HCT116 (cell line): ENCODE measurements at regions of chr3 and their contacts with region 1.

Region 1: DNA sequence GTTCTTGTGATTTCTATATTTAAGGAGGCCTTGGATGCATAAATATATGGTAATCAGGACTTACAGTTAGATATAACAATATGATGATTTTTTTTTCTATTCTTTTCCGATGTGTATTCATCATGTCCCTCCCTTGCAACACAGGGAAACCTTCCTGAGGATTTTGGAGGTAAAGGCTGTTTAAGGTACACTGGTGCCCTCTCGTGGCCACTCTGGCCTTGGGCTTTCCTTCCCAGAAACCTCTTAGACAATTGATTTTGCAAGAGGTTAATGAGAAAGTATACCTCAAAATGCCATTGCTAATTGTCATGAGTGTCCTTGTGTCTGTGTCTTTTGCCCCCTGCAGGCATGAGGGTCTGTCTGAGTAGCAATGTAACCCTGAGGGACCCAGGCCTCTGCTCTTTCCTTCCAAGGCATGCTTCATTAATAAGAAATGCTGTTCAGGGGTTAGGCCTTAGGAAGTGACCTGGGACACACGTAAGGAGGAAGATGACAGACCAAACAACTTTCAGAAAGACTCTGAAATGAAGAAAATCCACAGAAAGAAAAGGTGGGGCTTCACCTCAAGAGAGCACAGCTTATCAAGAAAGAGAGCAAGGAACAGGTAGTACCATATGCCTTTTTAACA is 70.3 kb upstream of the PPP2R3A start:
- DNase-seq: peak; percentile 72
- ATAC-seq: peak; percentile 79
- H3K4me3 ChIP-seq: no peak overlapping the region
- H3K27ac ChIP-seq: no peak overlapping the region
- H3K4me1 ChIP-seq: peaks cover 0 to 10% of the 10 kb centered on the region in 2 experiments; a peak in 1 of 4 replicates
- H3K27me3 ChIP-seq: no peaks in the 10 kb centered on the region
- CTCF ChIP-seq: peak; percentile 70 to 94 (median 90)
- POLR2A ChIP-seq: no peak
- RAD21 ChIP-seq: peak; percentile 91

Region 2: DNA sequence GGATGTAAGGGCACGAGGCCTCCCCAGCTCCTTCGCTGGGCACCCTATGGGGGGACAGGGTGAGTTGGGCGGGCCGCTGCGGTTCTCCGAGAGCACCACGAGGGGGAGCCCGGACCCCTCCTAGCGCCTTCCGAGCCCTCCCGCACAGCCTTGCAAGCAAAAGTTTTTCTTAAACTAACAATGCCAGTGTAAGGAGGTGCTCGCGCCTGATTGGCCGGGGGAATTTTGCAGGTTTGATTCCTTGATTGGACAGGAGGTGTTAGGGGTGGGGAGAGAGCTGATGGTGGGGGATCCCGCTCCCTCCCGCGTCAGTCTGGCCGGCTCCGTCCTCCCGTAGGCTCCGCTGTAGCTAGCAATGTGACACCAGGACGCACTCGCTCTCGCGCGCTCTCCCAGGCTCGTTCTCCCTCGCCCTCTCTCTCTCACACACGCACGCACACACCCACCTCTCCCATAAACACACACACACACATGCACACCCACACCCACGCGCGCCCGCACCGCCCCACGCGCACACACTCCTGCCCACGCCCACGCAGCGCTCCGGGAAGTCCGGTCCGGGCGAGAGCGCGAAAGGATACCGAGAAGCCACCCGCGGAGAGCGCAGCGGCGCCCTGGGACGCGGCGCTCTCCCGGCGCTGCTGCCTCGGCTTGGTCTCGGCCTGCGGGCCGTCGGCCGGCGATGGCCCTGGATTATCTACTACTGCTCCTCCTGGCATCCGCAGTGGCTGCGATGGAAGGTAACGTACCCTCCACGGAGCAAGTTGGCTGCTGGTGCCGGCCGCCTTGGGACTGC is 1100.1 kb before region 1 on chr3 and contains the start of gene EPHB1:
- CTCF ChIA-PET with region 1: no interaction called
- POLR2A ChIA-PET with region 1: no interaction called
- RAD21 ChIA-PET with region 1: no interaction called
- intact Hi-C with region 1: loop called (anchors 1 kb)
- DNase-seq: peak; percentile 60
- ATAC-seq: peak; percentile 97
- H3K4me3 ChIP-seq: no peak within 1 kb of the TSS
- H3K27ac ChIP-seq: no peak within 1 kb of the TSS
- H3K4me1 ChIP-seq: no peaks in the 10 kb centered on the region
- H3K27me3 ChIP-seq: peaks cover 30% of the 10 kb centered on the region
- CTCF ChIP-seq: peak; percentile 70 to 92 (median 89)
- POLR2A ChIP-seq: no peak
- RAD21 ChIP-seq: peak; percentile 91
- total RNA-seq, gene EPHB1: 0.86 TPM

Region 3: DNA sequence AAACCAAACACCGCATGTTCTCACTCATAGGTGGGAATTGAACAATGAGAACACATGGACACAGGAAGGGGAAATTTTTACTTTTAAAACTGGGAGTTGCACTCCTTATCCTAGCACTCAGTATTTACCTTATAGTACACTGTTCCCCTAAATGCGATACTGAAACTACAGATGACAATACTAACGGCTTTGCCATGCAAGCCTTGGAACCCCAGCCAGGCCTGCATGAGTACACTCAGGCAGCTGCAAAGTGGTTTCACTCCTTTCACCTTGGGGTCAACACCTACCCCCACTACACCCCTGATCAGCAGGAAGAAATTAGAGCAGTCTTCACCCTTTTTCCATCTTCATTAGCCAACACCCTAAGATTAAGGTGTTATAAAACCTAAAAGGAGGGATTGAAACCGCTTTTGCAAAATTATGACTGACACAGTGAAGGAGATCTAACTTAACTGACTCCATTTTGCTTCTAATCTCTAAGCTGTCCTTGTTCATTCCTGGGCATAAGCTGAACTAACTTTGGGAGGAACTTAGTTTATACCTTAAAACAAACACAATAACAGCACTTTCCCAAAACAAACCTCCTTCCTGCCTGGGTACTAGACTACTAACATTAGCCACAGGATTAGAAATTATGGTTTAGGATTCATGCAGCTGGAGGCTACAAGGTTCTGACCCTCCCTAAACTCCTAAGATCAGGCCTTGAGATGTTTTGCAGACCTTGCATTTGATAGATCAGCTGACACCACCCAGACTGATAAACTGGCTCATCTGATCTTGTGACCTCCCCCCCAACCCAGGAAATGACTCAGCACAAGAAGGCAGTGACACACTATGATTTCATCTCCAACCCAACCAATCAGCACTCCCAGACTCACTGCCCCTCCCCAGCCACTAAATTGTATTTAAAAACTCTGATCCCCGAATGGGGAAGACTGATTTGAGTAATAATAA is 381.8 kb before region 1 on chr3:
- CTCF ChIA-PET with region 1: interaction called, 3 read pairs
- POLR2A ChIA-PET with region 1: no interaction called
- RAD21 ChIA-PET with region 1: no interaction called
- intact Hi-C with region 1: loop called (anchors 5 kb)
- DNase-seq: peak; percentile 60
- ATAC-seq: peak; percentile 77
- H3K4me3 ChIP-seq: no peak overlapping the region
- H3K27ac ChIP-seq: no peak overlapping the region
- H3K4me1 ChIP-seq: peaks cover 4 to 23% of the 10 kb centered on the region in 2 experiments; a peak in 3 of 4 replicates
- H3K27me3 ChIP-seq: no peaks in the 10 kb centered on the region; the same call in 1 of the 2 replicates
- CTCF ChIP-seq: no peak
- POLR2A ChIP-seq: no peak
- RAD21 ChIP-seq: no peak

Region 4: GRCh38 chr3:135736740-135737139 is 158.5 kb before region 1 on chr3:
- CTCF ChIA-PET with region 1: interaction called, 6 read pairs
- POLR2A ChIA-PET with region 1: no interaction called
- RAD21 ChIA-PET with region 1: no interaction called
- intact Hi-C with region 1: loop called (anchors 1 kb)
- DNase-seq: peak; percentile 28
- ATAC-seq: peak; percentile 88
- H3K4me3 ChIP-seq: no peak overlapping the region
- H3K27ac ChIP-seq: no peak overlapping the region
- H3K4me1 ChIP-seq: no peaks in the 10 kb centered on the region
- H3K27me3 ChIP-seq: peaks cover 6% of the 10 kb centered on the region; the same call in 1 of the 2 replicates
- CTCF ChIP-seq: peak; percentile 34 to 60 (median 53); a peak in 5 of 6 replicates
- POLR2A ChIP-seq: no peak
- RAD21 ChIP-seq: peak; percentile 70

Region 5: GRCh38 chr3:136075218-136075808 is 180.1 kb after region 1 on chr3:
- CTCF ChIA-PET with region 1: no interaction called
- POLR2A ChIA-PET with region 1: no interaction called
- RAD21 ChIA-PET with region 1: no interaction called
- intact Hi-C with region 1: no loop called
- DNase-seq: peak; percentile 51
- ATAC-seq: peak; percentile 64; the same call in 1 of the 2 replicates
- H3K4me3 ChIP-seq: no peak overlapping the region
- H3K27ac ChIP-seq: no peak overlapping the region
- H3K4me1 ChIP-seq: peaks cover 7 to 13% of the 10 kb centered on the region in 2 experiments
- H3K27me3 ChIP-seq: no peaks in the 10 kb centered on the region
- CTCF ChIP-seq: peak; percentile 83 to 91 (median 87); a peak in 5 of 6 replicates
- POLR2A ChIP-seq: no peak
- RAD21 ChIP-seq: peak; percentile 97